B cell (primary cell): ENCODE measurements at regions of chr22 and their contacts with region 1.

Region 1: GRCh38 chr22:35392357-35392756 is 7.6 kb upstream of the MCM5 start:
- DNase-seq: peak; percentile 59
- ATAC-seq: peak; percentile 79
- H3K4me3 ChIP-seq: no peak overlapping the region
- H3K4me3 Mint-ChIP-seq: peak overlapping the region; percentile 54
- H3K27ac ChIP-seq: peak overlapping the region; percentile 34 to 48
- H3K27ac Mint-ChIP-seq: peak overlapping the region; percentile 73
- H3K4me1 ChIP-seq: peaks cover 22 to 32% of the 10 kb centered on the region in 2 donors
- H3K4me1 Mint-ChIP-seq: peaks cover 34% of the 10 kb centered on the region
- H3K27me3 ChIP-seq: no peaks in the 10 kb centered on the region
- H3K27me3 Mint-ChIP-seq: no peaks in the 10 kb centered on the region
- CTCF ChIP-seq: no peak

Region 2: DNA sequence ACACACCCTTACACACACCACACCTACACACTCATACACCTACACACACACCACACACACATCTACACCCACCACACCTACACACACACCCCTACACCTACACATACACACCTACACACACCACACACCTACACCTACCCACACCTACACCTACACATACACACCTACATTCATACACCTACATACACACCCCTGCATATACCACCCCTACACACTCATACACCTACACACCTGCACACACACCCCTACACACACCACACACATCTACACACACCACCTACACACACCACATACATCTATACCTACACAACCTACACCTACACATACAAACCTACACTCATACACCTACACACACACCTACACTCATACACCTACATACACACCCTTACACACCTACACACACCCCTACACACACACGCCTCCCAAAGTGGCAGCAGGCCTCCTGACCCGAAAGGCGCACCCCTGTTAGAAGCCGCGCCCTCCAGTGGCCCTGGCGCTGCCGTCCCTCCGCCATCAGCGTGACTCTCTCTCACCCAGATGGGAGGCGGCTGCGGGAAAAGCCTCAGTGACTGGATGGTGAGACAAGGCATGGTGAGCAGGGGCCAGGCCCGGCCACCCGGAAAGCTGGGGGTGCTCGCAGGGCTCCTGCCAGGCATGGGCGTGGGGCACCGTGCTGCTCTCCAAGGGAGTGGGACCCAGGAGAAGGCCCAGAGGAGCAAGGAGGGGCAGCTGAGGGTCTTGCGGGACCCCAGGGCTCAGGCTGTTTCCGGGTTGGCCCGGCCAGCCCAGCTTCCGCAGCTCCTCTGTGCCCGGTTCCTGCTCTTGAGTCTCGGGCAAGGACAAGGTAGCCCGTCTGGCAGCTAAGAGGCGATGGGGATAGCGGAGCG is 48.5 kb before region 1 on chr22:
- CTCF ChIA-PET with region 1: no interaction called
- POLR2A ChIA-PET with region 1: interaction called, 17 read pairs
- intact Hi-C with region 1: no loop called
- DNase-seq: no peak
- ATAC-seq: no peak
- H3K4me3 ChIP-seq: no peak overlapping the region
- H3K4me3 Mint-ChIP-seq: no peak overlapping the region
- H3K27ac ChIP-seq: no peak overlapping the region
- H3K27ac Mint-ChIP-seq: no peak overlapping the region
- H3K4me1 ChIP-seq: peaks cover 0 to 6% of the 10 kb centered on the region in 2 donors
- H3K4me1 Mint-ChIP-seq: peaks cover 17% of the 10 kb centered on the region
- H3K27me3 ChIP-seq: no peaks in the 10 kb centered on the region
- H3K27me3 Mint-ChIP-seq: no peaks in the 10 kb centered on the region
- CTCF ChIP-seq: no peak

Region 3: DNA sequence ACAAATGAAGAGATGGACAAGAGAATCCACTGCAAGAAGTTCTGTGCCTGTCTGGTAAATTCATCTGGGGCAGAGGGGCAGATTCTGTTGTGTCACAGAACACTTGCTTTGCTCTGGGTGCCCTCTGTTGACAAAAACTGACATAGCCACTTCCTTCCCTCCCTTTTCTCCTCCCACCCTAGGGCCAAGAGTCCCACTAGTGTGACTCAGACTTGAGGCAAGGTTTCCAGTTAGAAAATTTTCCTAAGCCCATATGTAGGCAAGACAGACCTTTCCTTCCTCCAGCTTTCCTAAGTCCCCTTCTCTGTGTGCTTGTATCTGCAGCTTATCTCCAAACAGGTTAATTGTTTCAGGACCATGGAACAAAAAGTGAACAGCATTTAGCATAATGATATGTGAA is 529.4 kb after region 1 on chr22:
- CTCF ChIA-PET with region 1: no interaction called
- POLR2A ChIA-PET with region 1: no interaction called
- intact Hi-C with region 1: no loop called
- DNase-seq: peak; percentile 15
- ATAC-seq: no peak
- H3K4me3 ChIP-seq: no peak overlapping the region
- H3K4me3 Mint-ChIP-seq: no peak overlapping the region
- H3K27ac ChIP-seq: no peak overlapping the region
- H3K27ac Mint-ChIP-seq: no peak overlapping the region
- H3K4me1 ChIP-seq: no peaks in the 10 kb centered on the region
- H3K4me1 Mint-ChIP-seq: no peaks in the 10 kb centered on the region
- H3K27me3 ChIP-seq: peaks cover 0 to 2% (median 0%) of the 10 kb centered on the region in 4 experiments
- H3K27me3 Mint-ChIP-seq: peaks cover 24% of the 10 kb centered on the region
- CTCF ChIP-seq: no peak

Region 4: DNA sequence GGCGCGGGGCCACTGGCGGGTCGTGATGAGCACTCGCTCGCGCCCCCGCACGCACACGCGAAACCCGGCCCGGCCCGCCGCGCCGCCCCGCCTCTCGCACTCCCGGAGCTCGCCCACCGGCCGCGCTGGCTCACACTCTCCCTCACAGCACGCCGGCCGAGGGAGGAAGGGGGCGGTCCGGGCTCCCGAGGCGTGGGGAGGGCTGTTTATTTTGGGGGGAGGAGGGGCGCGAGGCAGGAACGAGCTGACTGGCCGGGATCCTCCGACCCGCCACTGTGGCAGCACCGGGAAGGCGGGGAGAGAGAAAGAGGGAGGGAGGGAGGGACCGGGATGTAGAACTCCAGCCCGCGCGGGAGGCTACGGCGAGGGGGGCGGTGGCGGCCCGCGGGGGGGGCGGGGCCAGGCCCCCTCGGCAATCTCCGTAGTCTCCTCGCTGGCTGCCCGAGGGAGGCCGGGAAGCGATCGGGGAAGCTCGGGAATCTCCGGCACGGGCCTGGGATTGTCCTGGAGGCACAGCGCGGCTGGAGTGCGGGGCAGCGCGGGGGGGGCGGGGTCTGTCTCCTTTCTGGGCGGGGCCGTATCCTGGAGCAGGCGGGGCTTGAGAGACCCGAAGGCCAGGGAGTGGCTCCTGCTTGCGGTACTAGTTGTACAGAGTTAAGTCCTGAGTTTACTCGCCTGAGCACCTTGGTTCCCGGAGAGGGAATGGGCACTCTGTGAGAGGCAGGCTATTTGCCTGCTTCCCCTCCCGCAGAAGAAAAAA is 636.5 kb after region 1 on chr22 and contains the start of gene RBFOX2:
- CTCF ChIA-PET with region 1: no interaction called
- POLR2A ChIA-PET with region 1: no interaction called
- intact Hi-C with region 1: no loop called
- DNase-seq: peak; percentile 61
- ATAC-seq: peak; percentile 74
- H3K4me3 ChIP-seq: peak within 1 kb of the TSS; percentile 31 to 62 (median 47)
- H3K4me3 Mint-ChIP-seq: peak within 1 kb of the TSS; percentile 86
- H3K27ac ChIP-seq: no peak within 1 kb of the TSS
- H3K27ac Mint-ChIP-seq: no peak within 1 kb of the TSS
- H3K4me1 ChIP-seq: peaks cover 15 to 23% of the 10 kb centered on the region in 2 donors
- H3K4me1 Mint-ChIP-seq: peaks cover 15% of the 10 kb centered on the region
- H3K27me3 ChIP-seq: peaks cover 1 to 74% (median 56%) of the 10 kb centered on the region in 4 experiments
- H3K27me3 Mint-ChIP-seq: peaks cover 66% of the 10 kb centered on the region
- CTCF ChIP-seq: no peak
- total RNA-seq, gene RBFOX2: not detected in 2 replicates

Region 5: DNA sequence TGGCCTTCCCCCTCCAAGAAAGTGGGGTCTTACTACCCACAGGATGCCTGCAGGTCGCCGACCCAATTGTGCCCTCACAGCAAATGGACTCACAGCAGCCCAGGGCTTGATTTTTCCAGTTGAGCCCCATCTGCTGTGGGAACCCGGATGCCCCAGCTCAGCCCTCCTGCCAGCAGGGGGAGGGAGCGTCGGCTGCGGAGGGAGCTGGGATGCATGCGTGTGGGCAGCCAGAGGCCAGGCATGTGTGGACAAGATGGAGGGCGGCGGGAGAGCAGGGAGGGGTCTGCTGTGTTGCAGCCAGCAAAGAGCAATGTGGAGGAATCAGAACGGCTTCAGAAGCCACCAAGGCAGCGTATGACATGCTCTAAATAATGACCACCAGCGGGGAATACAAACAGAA is 1177.6 kb after region 1 on chr22:
- CTCF ChIA-PET with region 1: no interaction called
- POLR2A ChIA-PET with region 1: no interaction called
- intact Hi-C with region 1: no loop called
- DNase-seq: no peak
- ATAC-seq: no peak
- H3K4me3 ChIP-seq: no peak overlapping the region
- H3K4me3 Mint-ChIP-seq: no peak overlapping the region
- H3K27ac ChIP-seq: no peak overlapping the region
- H3K27ac Mint-ChIP-seq: no peak overlapping the region
- H3K4me1 ChIP-seq: no peaks in the 10 kb centered on the region
- H3K4me1 Mint-ChIP-seq: no peaks in the 10 kb centered on the region
- H3K27me3 ChIP-seq: no peaks in the 10 kb centered on the region
- H3K27me3 Mint-ChIP-seq: peaks cover 18% of the 10 kb centered on the region
- CTCF ChIP-seq: no peak